ENCODE measurements at regions of chr11 and their contacts with region 1.

Region 1: GRCh38 chr11:61747192-61747966 is 5.1 kb upstream of the MYRF start:
- DNase-seq: peak; percentile 88
- H3K4me3 Mint-ChIP-seq: no peak overlapping the region
- H3K27ac Mint-ChIP-seq: no peak overlapping the region
- H3K4me1 Mint-ChIP-seq: peaks cover 3% of the 10 kb centered on the region
- H3K27me3 Mint-ChIP-seq: peaks cover 13% of the 10 kb centered on the region

Region 2: GRCh38 chr11:61764606-61765260 is 17.4 kb after region 1 on chr11:
- intact Hi-C with region 1: no loop called
- DNase-seq: no peak
- H3K4me3 Mint-ChIP-seq: no peak overlapping the region
- H3K27ac Mint-ChIP-seq: no peak overlapping the region
- H3K4me1 Mint-ChIP-seq: no peaks in the 10 kb centered on the region
- H3K27me3 Mint-ChIP-seq: peaks cover 3% of the 10 kb centered on the region

Region 3: DNA sequence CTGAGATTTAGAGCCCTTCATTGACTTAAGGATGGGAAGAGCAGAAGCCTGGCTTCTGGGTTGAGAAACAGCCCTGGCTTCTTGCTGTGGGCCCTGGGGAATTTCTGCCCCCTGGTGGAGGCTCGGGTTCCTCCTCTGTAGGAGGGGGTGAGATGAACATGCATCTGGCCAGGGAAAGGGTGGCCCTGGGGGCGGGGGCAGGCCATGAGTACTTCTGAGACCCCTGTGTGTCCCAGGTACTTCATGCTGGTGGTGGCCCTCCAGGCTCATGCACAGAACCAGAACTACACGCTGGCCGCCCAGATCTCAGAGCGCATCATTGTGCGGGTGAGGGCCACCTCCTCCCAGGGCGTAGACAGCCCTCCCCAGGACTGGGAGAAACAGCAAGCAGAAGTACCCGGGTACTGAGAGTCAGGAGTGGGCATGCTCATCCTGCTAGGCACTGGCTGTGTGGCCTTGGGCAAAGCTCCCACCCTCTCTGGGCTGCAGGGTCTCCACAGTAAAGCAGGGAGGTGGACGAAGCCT is 29.2 kb after region 1 on chr11:
- intact Hi-C with region 1: loop called (anchors 2 kb)
- DNase-seq: peak; percentile 90
- H3K4me3 Mint-ChIP-seq: peak overlapping the region; percentile 71
- H3K27ac Mint-ChIP-seq: no peak overlapping the region
- H3K4me1 Mint-ChIP-seq: peaks cover 13% of the 10 kb centered on the region
- H3K27me3 Mint-ChIP-seq: no peaks in the 10 kb centered on the region

Region 4: DNA sequence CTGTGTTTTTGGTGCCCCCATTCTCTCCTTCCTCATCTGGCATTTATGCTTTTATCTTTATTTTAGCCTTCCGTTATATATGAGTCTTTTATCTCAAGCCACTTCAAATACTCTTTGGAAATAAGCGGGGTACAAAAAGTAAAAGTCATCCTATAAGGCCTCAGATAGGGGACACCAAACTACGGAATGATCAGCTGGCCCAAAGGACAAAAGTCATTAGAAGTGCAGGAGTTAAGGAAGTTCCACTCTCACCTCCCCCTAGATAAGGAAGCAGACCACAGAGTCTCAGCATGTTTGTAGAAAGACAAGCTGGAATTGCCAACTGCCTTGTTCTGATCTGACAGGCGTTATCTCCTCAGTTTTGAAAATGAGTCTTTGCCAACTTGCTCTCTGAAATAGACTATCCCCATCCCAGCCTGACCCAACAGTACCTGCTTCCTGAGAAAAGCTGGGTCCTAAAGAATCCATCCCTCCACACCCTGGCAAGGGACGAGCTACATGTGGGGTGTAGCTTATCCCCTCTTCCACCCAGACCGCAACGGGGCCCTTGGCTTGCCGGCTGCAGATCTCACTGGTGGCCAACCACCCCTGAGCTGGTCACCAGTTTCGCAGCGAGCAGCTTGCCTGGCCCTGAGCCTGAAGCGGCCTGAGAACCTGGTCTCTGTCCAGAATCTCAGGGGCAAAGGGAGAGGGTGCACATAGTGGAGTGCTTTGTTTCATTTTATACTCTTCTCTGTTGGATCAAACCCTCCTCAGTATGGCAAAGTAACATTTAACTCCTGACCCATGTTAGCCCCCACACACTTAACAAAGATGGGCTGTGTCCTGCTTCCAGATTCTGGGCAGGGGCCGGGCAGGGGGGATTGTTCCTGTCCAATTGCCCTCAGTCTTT is 94.5 kb after region 1 on chr11:
- intact Hi-C with region 1: no loop called
- DNase-seq: no peak
- H3K4me3 Mint-ChIP-seq: no peak overlapping the region
- H3K27ac Mint-ChIP-seq: no peak overlapping the region
- H3K4me1 Mint-ChIP-seq: peaks cover 16% of the 10 kb centered on the region
- H3K27me3 Mint-ChIP-seq: no peaks in the 10 kb centered on the region